H1 (cell line): ENCODE measurements at regions of chr11 and their contacts with region 1.

Region 1: GRCh38 chr11:5476184-5476819 is 12.2 kb upstream of the OR52D1 start:
- DNase-seq: no peak
- H3K4me3 ChIP-seq: no peak overlapping the region
- H3K27ac ChIP-seq: no peak overlapping the region
- H3K4me1 ChIP-seq: no peaks in the 10 kb centered on the region
- H3K27me3 ChIP-seq: no peaks in the 10 kb centered on the region
- CTCF ChIP-seq: peak in 2 of 3 experiments; percentile 73 to 87; a peak in 3 of 4 replicates
- EP300 ChIP-seq: no peak
- POLR2A ChIP-seq: no peak
- RAD21 ChIP-seq: peak; percentile 66 to 74

Region 2: DNA sequence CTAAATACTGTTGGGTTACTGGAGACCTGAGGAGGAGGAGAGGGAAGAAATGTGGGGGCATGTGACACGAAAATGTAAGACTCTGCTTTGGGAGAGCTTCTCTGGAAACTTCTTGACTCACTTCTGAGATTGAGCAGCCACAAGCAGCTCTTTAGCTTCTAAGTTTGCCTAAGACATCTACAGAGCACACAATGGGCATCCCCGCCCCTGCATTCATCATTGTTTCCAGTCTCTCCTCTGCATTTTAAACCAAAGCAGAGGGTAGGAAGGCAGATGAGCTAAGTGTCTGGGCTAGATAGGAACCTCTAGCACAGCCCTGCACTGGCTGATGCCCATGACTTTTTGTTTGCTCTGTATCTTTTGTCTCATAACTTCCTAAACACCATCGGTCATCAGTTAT is 10.1 kb after region 1 on chr11:
- CTCF ChIA-PET with region 1: interaction called, 10 read pairs
- POLR2A ChIA-PET with region 1: no interaction called
- DNase-seq: no peak
- H3K4me3 ChIP-seq: no peak overlapping the region
- H3K27ac ChIP-seq: no peak overlapping the region
- H3K4me1 ChIP-seq: no peaks in the 10 kb centered on the region
- H3K27me3 ChIP-seq: no peaks in the 10 kb centered on the region
- CTCF ChIP-seq: no peak
- EP300 ChIP-seq: no peak
- POLR2A ChIP-seq: no peak
- RAD21 ChIP-seq: no peak

Region 3: DNA sequence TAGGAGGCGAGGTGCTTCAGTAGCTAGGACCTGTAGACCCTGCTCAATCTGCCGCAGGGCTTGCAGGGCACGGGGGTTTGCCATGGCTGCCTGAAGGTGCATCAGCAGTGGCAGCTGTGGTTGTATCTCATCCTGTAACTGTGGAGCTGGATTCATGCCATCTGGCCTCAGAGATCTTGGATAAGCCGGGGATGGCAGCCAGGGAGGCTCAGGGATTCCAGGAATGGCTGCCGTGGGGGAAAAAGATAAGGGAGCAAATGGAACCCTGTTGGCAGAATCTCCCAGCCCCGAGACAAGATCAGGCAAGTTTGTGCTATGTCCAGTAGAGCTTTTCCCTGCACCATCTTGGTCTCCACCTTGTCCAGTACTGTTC is 31.6 kb after region 1 on chr11:
- CTCF ChIA-PET with region 1: interaction called, 19 read pairs
- POLR2A ChIA-PET with region 1: no interaction called
- DNase-seq: no peak
- H3K4me3 ChIP-seq: no peak overlapping the region
- H3K27ac ChIP-seq: no peak overlapping the region
- H3K4me1 ChIP-seq: no peaks in the 10 kb centered on the region
- H3K27me3 ChIP-seq: no peaks in the 10 kb centered on the region
- CTCF ChIP-seq: no peak
- EP300 ChIP-seq: no peak
- POLR2A ChIP-seq: no peak
- RAD21 ChIP-seq: no peak